GM10248 (cell line): ENCODE measurements at regions of chrX and their contacts with region 1.

Region 1: DNA sequence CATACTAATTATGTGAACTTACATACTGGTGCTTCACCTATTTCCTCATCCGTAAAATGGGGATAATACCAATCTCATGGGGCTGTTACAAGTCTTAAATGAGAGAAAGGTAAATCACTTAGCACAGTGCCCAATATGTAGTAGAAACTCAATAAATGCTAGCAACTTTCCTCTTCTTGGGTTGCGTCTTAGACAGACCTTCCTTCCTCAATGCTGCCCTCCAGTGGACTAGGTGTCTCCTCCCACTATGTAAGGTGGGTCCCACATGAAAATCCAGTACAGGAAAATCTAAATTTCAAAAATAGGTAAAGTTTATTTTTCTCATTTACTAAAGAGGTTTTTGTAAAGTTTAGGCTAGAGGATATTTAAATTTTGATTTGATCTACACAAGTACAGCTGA is 20.6 kb downstream of the ZDHHC9 start:
- DNase-seq: peak; percentile 52
- CTCF ChIP-seq: peak; percentile 47

Region 2: DNA sequence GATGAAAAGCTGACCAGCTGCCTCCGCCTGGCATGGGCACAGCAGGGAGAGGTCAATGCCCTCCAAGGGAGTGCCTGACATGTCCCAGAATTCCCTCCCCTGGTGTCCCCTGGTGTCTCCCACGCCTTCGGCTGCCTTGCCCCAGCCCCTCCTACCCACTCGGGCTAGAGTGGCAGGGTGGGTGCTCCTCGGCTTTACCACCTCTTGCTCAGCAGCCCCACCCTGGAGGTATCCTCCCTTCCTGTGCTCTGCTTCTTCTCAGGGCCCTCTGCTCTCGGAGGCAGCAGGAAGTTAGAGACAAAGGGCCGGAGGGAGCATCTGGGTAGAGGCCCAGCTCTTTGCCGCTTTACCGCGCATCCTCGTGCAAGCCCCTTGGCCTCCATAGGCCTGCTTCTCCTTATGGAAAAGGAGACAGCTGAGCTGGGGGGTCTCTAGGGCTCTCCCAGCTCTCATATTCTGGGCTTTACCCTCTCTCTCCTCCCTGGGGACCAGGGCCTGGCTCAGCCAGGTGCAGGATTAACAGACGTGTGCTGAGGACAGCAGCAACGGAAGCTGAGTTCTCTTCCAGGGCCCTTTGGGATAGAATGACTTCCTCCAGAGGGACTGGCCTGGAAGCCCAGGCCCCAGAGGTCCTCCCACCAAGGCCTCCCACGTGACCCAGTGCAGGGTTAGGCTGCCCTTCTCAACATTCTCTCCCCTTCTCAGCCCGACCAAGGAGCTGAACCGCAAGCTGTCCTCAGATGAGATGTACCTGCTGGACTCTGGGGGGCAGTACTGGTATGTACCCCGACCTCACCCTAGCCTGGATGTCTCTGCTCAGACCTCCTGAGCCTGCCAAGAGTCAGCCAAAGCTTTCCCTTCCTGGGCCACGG is 67.1 kb before region 1 on chrX:
- CTCF ChIA-PET with region 1: interaction called, 11 read pairs
- POLR2A ChIA-PET with region 1: no interaction called
- DNase-seq: peak; percentile 45
- CTCF ChIP-seq: peak; percentile 21

Region 3: DNA sequence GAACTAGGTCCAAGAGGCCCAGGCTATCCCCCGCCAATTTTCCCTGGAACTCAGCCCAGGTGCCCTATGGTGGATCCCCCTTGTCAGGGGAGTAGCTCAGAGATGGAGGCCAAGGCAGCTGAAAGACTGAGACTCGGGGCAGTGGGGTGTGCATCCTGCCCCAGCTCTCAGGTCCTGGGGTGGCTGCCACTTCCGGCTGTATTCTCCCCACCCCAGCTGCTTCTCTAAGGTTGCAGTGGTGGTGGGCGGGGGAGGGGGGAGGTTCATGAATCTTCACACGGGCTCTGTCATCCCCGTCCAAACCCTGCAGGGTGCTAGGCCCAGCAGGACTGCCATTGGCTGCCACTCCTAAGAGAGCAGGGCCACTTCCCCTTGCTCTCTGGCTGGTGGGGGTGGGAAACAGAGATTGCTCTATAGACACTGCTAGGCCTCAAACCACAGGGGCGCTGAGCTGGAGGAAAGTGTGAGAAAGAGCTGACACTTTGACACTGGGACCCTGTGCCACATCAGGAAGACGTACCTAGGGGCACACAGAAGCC is 41.9 kb before region 1 on chrX:
- CTCF ChIA-PET with region 1: interaction called, 15 read pairs
- POLR2A ChIA-PET with region 1: interaction called, 3 read pairs
- DNase-seq: peak; percentile 81
- CTCF ChIP-seq: no peak